SK-N-SH (cell line): ENCODE measurements at regions of chr9 and their contacts with region 1.

Region 1: GRCh38 chr9:134449221-134449894 is 123.1 kb downstream of the RXRA start:
- DNase-seq: peak; percentile 97
- H3K4me3 ChIP-seq: no peak overlapping the region; a peak in 1 of 4 replicates
- H3K27ac ChIP-seq: peak overlapping the region; percentile 36 to 48; a peak in 2 of 4 replicates
- H3K4me1 ChIP-seq: peaks cover 4 to 13% of the 10 kb centered on the region in 2 experiments; a peak in 2 of 4 replicates
- H3K27me3 ChIP-seq: no peaks in the 10 kb centered on the region
- CTCF ChIP-seq: peak; percentile 90
- EP300 ChIP-seq: no peak
- RAD21 ChIP-seq: peak; percentile 100

Region 2: GRCh38 chr9:134163353-134164196 is 285.8 kb before region 1 on chr9:
- CTCF ChIA-PET with region 1: interaction called, 384 read pairs
- POLR2A ChIA-PET with region 1: no interaction called
- DNase-seq: peak; percentile 67
- H3K4me3 ChIP-seq: no peak overlapping the region
- H3K27ac ChIP-seq: no peak overlapping the region; a peak in 1 of 4 replicates
- H3K4me1 ChIP-seq: no peaks in the 10 kb centered on the region; a peak in 2 of 4 replicates
- H3K27me3 ChIP-seq: no peaks in the 10 kb centered on the region
- CTCF ChIP-seq: no peak
- EP300 ChIP-seq: no peak
- RAD21 ChIP-seq: no peak

Region 3: GRCh38 chr9:134422301-134423090 is 26.9 kb before region 1 on chr9:
- CTCF ChIA-PET with region 1: no interaction called
- POLR2A ChIA-PET with region 1: no interaction called
- DNase-seq: no peak
- H3K4me3 ChIP-seq: no peak overlapping the region
- H3K27ac ChIP-seq: no peak overlapping the region
- H3K4me1 ChIP-seq: peaks cover 0 to 6% of the 10 kb centered on the region in 2 experiments; a peak in 1 of 4 replicates
- H3K27me3 ChIP-seq: no peaks in the 10 kb centered on the region
- CTCF ChIP-seq: no peak
- EP300 ChIP-seq: no peak
- RAD21 ChIP-seq: no peak

Region 4: GRCh38 chr9:134518004-134518606 is 68.7 kb after region 1 on chr9:
- CTCF ChIA-PET with region 1: interaction called, 10 read pairs
- POLR2A ChIA-PET with region 1: no interaction called
- DNase-seq: peak; percentile 96
- H3K4me3 ChIP-seq: no peak overlapping the region
- H3K27ac ChIP-seq: peak overlapping the region; percentile 23 to 64; a peak in 3 of 4 replicates
- H3K4me1 ChIP-seq: peaks cover 0 to 32% of the 10 kb centered on the region in 2 experiments; a peak in 1 of 4 replicates
- H3K27me3 ChIP-seq: no peaks in the 10 kb centered on the region
- CTCF ChIP-seq: no peak
- EP300 ChIP-seq: peak in 1 of 2 experiments; percentile 44; a peak in 1 of 4 replicates
- RAD21 ChIP-seq: no peak; the same call in none of the 2 replicates

Region 5: GRCh38 chr9:134670042-134670525 is 220.7 kb after region 1 on chr9:
- CTCF ChIA-PET with region 1: interaction called, 14 read pairs
- POLR2A ChIA-PET with region 1: no interaction called
- DNase-seq: no peak
- H3K4me3 ChIP-seq: no peak overlapping the region
- H3K27ac ChIP-seq: peak overlapping the region; percentile 67 to 72; a peak in 3 of 4 replicates
- H3K4me1 ChIP-seq: peaks cover 7 to 38% of the 10 kb centered on the region in 2 experiments; a peak in 3 of 4 replicates
- H3K27me3 ChIP-seq: no peaks in the 10 kb centered on the region
- CTCF ChIP-seq: no peak
- EP300 ChIP-seq: peak in 1 of 2 experiments; percentile 80; a peak in 2 of 4 replicates
- RAD21 ChIP-seq: no peak

Region 6: DNA sequence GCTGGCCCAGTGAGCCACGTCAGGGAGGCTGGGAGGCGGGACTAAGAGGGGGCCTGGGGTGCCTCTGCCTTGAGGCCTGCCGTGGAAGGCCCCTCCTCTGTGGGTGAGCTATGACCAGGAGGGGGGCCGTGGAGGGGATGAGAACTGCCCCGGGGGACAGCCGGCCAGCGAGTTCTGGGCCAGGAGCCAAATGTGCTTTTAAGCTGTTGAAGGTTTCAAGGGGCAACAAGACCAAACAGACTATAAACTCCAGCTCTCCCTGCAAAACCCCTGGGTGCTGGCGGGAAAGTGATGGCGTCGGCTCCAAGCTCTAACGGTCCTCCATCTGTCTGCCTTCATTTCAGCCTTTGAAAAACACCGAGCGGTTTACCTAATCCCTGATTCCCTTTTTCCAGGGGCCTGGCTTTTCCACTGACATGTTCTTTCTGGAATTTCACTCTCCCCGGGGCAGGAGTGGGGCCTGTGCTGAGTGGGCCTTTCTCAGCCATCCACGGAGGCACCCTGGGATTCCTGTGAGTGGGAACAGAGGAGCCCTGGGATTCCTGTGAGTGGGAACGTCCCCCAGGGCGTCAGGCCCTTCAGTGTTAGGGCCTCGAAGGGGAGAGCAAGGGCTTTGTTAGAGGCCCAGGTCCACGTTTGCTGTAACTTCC is 257.8 kb after region 1 on chr9:
- CTCF ChIA-PET with region 1: interaction called, 35 read pairs
- POLR2A ChIA-PET with region 1: no interaction called
- DNase-seq: peak; percentile 98
- H3K4me3 ChIP-seq: no peak overlapping the region
- H3K27ac ChIP-seq: peak overlapping the region; percentile 76 to 91
- H3K4me1 ChIP-seq: peaks cover 27 to 63% of the 10 kb centered on the region in 2 experiments; a peak in 3 of 4 replicates
- H3K27me3 ChIP-seq: no peaks in the 10 kb centered on the region
- CTCF ChIP-seq: no peak
- EP300 ChIP-seq: peak; percentile 60 to 84; a peak in 3 of 4 replicates
- RAD21 ChIP-seq: no peak

Region 7: DNA sequence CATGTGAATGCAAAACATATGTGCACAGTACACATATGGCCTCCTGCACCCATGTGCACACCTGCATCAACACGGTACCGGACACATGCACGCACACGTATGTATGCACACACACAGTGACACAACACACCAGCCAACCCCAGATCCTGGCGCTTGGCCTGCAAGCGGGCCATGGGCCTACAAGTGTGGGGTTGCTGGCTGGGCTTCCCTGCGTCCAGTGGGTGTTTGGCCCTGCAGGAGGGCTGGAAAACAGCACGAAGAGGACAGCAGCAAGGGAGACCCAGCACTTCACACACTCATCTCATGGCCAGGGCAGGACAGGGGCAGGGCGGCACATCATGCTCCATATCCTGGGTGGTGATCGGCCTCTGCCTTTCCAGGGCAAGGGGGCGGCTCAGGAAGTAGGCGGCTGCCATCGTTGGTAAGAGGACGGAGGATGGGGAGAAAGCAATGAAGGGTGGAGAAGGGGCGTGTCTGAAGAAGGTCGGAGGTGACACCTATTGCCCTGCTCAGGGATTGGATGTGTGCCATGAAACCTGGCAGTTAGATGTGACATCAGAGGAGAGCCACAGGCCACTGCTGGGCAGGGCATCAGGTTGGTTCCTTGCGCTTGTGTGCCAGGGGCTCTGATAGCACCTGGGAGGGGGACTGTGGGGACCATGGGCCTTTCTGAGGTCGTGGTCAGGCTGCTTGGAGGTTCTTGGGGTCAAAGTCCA is 270.1 kb after region 1 on chr9:
- CTCF ChIA-PET with region 1: no interaction called
- POLR2A ChIA-PET with region 1: no interaction called
- DNase-seq: no peak
- H3K4me3 ChIP-seq: no peak overlapping the region
- H3K27ac ChIP-seq: no peak overlapping the region
- H3K4me1 ChIP-seq: no peaks in the 10 kb centered on the region; a peak in 1 of 4 replicates
- H3K27me3 ChIP-seq: no peaks in the 10 kb centered on the region
- CTCF ChIP-seq: no peak
- EP300 ChIP-seq: no peak
- RAD21 ChIP-seq: no peak

Region 8: DNA sequence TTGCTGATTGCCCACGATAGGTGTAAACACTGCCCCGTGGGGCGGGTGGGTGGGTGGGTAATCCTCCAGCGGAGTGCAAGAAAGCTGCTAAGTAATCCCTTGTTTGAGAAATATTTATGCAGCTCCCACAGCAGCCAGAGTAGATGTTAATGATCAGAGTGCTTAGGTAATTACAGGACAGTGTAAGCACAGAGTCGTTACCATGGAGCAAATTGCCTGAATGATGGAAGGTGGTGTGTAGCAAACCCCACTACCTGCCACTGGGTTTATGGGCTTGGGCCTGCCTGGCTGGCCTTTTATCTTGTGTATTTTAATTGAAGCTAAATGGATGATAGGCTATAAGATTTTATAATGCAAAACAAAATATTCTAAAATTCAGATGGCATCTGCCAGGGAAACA is 302.3 kb after region 1 on chr9:
- CTCF ChIA-PET with region 1: interaction called, 10 read pairs
- POLR2A ChIA-PET with region 1: no interaction called
- DNase-seq: no peak
- H3K4me3 ChIP-seq: no peak overlapping the region
- H3K27ac ChIP-seq: no peak overlapping the region
- H3K4me1 ChIP-seq: no peaks in the 10 kb centered on the region
- H3K27me3 ChIP-seq: no peaks in the 10 kb centered on the region
- CTCF ChIP-seq: no peak
- EP300 ChIP-seq: no peak
- RAD21 ChIP-seq: no peak